ENCODE measurements at regions of chr4 and their contacts with region 1.

Region 1: GRCh38 chr4:8403173-8403753 is 37.3 kb downstream of the ACOX3 start:
- DNase-seq: peak; percentile 77
- H3K4me3 ChIP-seq: no peak overlapping the region
- H3K27ac ChIP-seq: no peak overlapping the region
- H3K4me1 ChIP-seq: no peaks in the 10 kb centered on the region
- H3K27me3 ChIP-seq: no peaks in the 10 kb centered on the region
- CTCF ChIP-seq: peak; percentile 83

Region 2: DNA sequence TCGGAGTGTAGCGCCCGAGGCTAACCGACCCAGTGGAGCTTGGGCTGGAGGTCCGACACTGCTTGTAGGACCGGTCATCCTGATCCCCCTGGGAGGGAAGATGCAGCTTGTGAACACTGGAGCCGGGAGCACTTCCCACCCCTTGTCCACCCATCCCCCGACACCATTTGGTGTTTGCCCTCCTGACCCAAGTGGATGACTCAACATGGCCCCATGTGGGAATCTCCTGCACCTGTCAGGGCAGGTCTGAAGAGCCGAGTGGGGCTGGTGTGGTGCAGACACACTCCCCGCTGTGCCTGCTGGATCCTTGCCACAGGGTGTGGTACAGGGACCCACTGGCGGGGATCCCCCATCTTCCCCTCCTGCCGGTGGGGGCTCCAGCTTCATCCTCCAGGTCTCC is 373.6 kb before region 1 on chr4:
- intact Hi-C with region 1: no loop called
- DNase-seq: no peak
- H3K4me3 ChIP-seq: no peak overlapping the region
- H3K27ac ChIP-seq: no peak overlapping the region
- H3K4me1 ChIP-seq: no peaks in the 10 kb centered on the region
- H3K27me3 ChIP-seq: no peaks in the 10 kb centered on the region
- CTCF ChIP-seq: no peak

Region 3: DNA sequence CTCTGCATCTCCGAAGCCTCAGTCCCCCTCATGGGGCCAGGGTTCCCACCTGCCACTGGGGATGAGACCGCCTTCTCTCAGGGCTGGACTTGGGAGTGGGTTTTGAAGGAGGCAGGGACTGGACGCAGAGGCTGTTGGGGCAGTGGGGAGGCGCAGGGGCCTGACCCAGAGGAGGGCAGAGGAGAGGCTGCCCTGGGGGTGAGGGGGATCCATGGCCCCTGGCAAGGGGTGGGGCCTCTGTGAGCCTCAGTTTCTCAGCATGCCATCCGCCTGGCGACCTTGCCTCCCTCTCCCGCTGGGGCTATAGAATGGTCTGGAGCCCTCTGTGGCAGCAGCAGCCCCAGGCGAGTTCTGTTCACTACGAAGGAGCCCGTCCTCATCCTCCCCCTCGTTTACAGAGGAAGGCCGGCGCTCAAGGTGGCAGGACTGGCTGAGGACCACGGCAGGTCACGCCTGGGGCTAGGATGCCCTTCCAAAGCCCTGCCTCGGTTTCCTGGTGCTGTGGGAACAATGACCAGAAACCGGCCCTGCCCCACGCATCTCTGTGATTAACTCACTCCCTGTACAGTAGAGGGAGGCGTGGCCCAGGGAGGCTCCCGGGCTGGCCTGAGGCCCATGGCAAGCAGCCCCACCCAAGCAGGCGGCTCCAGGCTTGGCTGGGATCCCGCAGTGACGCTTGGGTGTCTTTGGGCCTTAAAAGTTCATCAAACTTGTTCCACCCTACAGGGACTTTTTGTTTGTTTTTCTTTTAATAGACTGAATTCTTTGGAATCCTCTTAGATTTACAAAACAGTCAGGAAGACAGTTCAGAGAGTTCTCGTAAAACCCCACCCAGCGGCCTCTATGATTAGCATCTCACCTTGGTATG is 220.2 kb before region 1 on chr4:
- intact Hi-C with region 1: loop called (anchors 5 kb)
- DNase-seq: peak; percentile 97
- H3K4me3 ChIP-seq: no peak overlapping the region
- H3K27ac ChIP-seq: no peak overlapping the region
- H3K4me1 ChIP-seq: peaks cover 13% of the 10 kb centered on the region
- H3K27me3 ChIP-seq: no peaks in the 10 kb centered on the region
- CTCF ChIP-seq: no peak

Region 4: GRCh38 chr4:8241895-8242696 is 161.2 kb before region 1 on chr4:
- intact Hi-C with region 1: loop called (anchors 5 kb)
- DNase-seq: peak; percentile 83
- H3K4me3 ChIP-seq: no peak overlapping the region
- H3K27ac ChIP-seq: no peak overlapping the region
- H3K4me1 ChIP-seq: no peaks in the 10 kb centered on the region
- H3K27me3 ChIP-seq: no peaks in the 10 kb centered on the region
- CTCF ChIP-seq: peak; percentile 93

Region 5: DNA sequence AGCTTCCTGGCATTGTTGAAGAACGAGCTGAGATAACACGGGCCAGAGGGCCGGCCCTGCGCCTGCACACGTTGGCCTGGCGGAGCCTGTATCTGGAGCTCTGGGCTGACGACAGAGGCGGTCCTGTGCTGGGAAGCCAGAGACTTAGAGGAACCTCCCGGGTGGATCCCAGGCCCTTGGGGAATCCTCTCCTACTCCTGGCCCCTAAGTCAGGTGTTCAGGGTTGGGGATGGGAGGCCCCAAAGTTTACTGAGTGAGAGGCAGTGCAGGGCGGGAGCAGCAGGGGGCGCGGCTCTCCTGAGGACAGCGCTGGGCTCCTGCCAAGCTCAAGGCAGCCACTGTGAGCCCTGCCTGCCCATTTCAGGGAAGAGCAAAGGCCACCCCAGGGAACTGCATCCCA is 136.2 kb before region 1 on chr4:
- intact Hi-C with region 1: loop called (anchors 5 kb)
- DNase-seq: peak; percentile 70
- H3K4me3 ChIP-seq: no peak overlapping the region
- H3K27ac ChIP-seq: no peak overlapping the region
- H3K4me1 ChIP-seq: no peaks in the 10 kb centered on the region
- H3K27me3 ChIP-seq: peaks cover 13% of the 10 kb centered on the region
- CTCF ChIP-seq: peak; percentile 51